ENCODE measurements at regions of chr19 and their contacts with region 1.

Region 1: GRCh38 chr19:36054119-36054732 is at the start of gene THAP8:
- DNase-seq: peak; percentile 99
- H3K4me3 ChIP-seq: peak within 1 kb of the TSS; percentile 52 to 65 (median 52)
- H3K27ac ChIP-seq: peak within 1 kb of the TSS; percentile 85
- H3K4me1 ChIP-seq: peaks cover 8% of the 10 kb centered on the region
- H3K27me3 ChIP-seq: no peaks in the 10 kb centered on the region
- CTCF ChIP-seq: peak; percentile 32 to 52
- total RNA-seq, gene THAP8: 2.3 to 2.6 TPM

Region 2: DNA sequence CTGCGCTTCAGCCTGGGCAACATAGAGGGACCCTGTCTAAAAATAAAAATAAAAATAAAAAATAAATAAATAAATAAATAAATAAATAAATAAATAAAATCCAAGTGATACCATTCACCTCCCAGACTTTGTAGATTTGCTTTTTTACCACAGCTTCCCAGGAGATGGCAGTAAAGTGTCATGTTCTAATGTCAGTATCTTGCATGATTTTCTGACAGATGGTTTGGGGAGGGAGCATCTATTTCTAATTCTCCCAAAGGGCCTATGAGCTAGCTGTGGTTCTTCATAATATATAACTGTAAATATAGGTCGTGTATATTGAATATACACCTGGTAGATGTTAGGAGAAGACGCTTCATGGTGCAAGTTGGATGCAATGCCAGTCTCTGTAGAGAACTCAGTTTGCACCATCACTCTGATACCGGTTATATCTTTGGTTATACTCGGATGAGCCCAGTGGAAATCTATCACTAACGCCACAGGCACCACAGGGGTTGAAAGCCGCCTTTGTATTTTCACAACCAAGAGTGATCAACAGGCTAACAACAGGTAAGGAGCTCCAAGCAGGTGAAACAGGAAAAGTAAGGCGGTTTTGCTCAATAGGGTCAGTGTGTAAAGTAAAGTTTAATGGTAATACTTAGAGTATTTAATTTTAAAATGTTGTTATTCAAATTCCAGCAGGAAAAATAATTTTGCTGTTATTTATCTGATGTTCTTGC is 172.0 kb before region 1 on chr19:
- CTCF ChIA-PET with region 1: no interaction called
- dilution Hi-C with region 1: no loop called
- in situ Hi-C with region 1: no loop called
- intact Hi-C with region 1: loop called (anchors 5 kb)
- DNase-seq: peak; percentile 66
- H3K4me3 ChIP-seq: no peak overlapping the region
- H3K27ac ChIP-seq: no peak overlapping the region
- H3K4me1 ChIP-seq: no peaks in the 10 kb centered on the region
- H3K27me3 ChIP-seq: no peaks in the 10 kb centered on the region
- CTCF ChIP-seq: peak; percentile 39 to 58

Region 3: DNA sequence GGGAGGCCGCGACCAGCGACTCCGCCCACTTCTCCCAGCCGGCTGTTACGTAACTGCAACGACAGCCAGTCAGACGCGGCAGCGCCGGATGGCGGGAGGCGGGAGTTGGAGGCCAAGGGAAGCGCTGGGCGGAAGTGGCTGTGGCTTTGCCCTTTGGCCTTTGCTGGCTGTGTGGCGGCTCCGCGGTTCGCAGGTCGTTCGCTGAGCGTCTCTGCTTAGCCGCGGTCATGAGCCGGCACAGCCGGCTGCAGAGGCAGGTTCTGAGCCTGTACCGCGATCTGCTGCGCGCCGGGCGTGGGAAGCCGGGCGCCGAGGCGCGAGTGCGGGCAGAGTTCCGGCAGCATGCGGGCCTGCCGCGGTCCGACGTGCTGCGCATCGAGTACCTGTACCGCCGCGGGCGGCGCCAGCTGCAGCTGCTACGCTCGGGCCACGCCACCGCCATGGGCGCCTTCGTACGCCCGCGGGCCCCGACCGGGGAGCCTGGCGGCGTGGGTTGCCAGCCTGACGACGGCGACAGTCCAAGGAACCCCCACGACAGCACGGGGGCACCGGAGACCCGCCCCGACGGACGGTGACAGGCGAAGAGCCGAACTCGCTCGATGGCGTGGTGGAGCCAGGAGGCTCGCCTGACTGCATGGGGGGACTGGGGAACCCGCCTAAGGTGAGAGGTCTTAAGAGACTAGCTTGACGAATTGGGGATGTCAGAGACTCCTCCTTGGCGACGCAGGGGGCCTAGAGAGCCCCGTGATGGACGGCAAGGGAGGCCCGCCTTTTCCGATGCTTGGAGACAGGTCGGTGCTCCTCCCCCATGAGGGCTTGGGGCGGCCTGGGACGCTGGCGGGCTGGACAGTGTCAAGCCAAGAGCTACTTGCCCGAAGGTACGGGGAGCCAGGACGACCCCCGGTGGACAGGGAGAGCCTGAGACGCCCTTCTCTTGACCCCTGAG is 58.9 kb before region 1 on chr19 and contains the start of gene SDHAF1:
- CTCF ChIA-PET with region 1: no interaction called
- dilution Hi-C with region 1: no loop called
- in situ Hi-C with region 1: no loop called
- intact Hi-C with region 1: loop called (anchors 2 kb)
- DNase-seq: peak; percentile 88
- H3K4me3 ChIP-seq: peak within 1 kb of the TSS; percentile 57 to 81 (median 69)
- H3K27ac ChIP-seq: peak within 1 kb of the TSS; percentile 20
- H3K4me1 ChIP-seq: peaks cover 22% of the 10 kb centered on the region
- H3K27me3 ChIP-seq: no peaks in the 10 kb centered on the region
- CTCF ChIP-seq: no peak
- total RNA-seq, gene SDHAF1: 10.8 to 14.5 TPM

Region 4: GRCh38 chr19:36030264-36031148 is 23.7 kb before region 1 on chr19:
- CTCF ChIA-PET with region 1: no interaction called
- dilution Hi-C with region 1: no loop called
- in situ Hi-C with region 1: no loop called
- intact Hi-C with region 1: loop called (anchors 1 kb)
- DNase-seq: peak; percentile 53
- H3K4me3 ChIP-seq: no peak overlapping the region
- H3K27ac ChIP-seq: no peak overlapping the region
- H3K4me1 ChIP-seq: no peaks in the 10 kb centered on the region
- H3K27me3 ChIP-seq: no peaks in the 10 kb centered on the region
- CTCF ChIP-seq: peak; percentile 33 to 70

Region 5: DNA sequence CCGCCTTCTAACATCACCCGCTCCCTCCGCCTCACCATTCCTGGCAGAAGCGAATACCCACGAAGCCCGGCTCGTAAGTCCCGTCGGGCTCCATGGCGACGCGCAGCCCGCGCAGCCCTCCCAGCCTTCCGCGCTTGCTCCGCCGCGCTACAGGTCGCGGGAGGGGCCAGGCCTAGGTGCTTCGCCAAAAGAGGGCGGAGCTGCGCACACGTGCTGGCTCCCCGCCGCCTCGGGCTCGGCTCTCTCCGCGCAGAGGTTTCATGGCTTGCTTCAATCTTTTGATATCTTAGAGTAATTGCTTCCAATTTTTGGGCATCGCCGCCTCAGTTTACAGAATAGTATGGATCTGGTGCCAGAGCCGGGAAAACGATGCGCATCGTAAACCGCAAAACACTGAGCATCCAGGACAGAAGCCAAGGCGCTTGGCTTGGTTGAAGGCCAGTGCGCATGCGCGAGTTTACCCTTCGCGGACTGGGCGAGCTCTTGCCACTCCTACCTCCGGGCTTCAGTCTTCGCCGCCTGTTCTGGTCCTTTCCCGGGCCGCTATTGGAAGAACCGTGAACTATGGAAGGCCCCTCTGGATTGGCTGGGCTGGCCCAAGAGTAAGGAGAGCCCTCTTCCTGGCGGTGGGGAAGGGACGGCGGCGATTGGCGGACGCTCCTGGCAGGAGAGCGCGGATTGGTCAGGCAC is 60.7 kb after region 1 on chr19 and contains the start of gene POLR2I:
- CTCF ChIA-PET with region 1: no interaction called
- dilution Hi-C with region 1: no loop called
- in situ Hi-C with region 1: no loop called
- intact Hi-C with region 1: loop called (anchors 1 kb)
- DNase-seq: peak; percentile 100
- H3K4me3 ChIP-seq: peak within 1 kb of the TSS; percentile 68 to 93 (median 84)
- H3K27ac ChIP-seq: peak within 1 kb of the TSS; percentile 85
- H3K4me1 ChIP-seq: peaks cover 24% of the 10 kb centered on the region
- H3K27me3 ChIP-seq: no peaks in the 10 kb centered on the region
- CTCF ChIP-seq: no peak
- total RNA-seq, gene POLR2I: 28.7 to 84.5 TPM

Region 6: GRCh38 chr19:36207605-36208252 is 153.5 kb after region 1 on chr19:
- CTCF ChIA-PET with region 1: no interaction called
- dilution Hi-C with region 1: no loop called
- in situ Hi-C with region 1: no loop called
- intact Hi-C with region 1: no loop called
- DNase-seq: no peak
- H3K4me3 ChIP-seq: no peak overlapping the region
- H3K27ac ChIP-seq: no peak overlapping the region
- H3K4me1 ChIP-seq: no peaks in the 10 kb centered on the region
- H3K27me3 ChIP-seq: no peaks in the 10 kb centered on the region
- CTCF ChIP-seq: no peak